ENCODE measurements at regions of chr12 and their contacts with region 1.

Region 1: DNA sequence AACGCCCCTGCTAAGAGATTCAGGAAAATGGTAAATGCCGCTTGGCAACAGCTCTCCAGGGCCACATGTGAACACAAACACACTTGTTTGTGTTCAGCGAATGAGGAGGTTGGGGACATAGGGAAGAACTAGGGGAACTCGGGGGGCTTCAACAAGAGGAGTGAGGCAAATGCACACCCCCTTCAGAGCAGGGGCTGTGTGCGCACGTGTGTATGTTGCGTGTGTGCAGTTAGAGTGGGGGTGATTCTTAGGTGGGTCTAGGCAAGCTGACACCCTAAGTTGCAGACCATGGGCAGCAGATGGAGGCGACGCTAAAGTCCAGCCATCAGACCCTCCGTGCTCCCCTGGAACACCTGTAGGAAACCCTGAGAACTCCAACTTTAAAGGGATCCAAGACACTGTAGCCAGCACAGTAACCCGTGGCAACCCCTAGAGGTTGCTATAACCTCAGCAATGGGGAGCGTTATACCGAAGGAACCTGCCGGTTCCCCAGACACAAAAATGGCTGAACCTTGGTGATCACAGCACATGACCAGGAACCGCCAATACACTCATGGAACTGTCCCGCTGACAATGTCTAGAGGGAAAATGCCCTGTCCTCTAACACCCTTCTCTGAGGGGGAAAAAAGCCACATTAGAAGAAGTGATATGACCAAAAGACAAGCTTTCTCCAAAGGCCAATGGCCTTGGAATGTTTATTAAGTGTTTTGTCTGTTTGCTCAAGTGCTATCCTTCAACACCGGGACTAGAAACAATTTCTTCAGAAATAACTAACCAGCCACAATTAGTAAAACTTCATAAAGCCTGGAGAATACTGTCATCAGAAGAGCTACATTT is 86.5 kb upstream of the CEP83 start:
- DNase-seq: peak in 3 of 4 donors; percentile 37 to 65 (median 44)
- ATAC-seq: peak; percentile 99
- H3K4me3 ChIP-seq: no peak overlapping the region
- H3K27ac ChIP-seq: no peak overlapping the region
- H3K4me1 ChIP-seq: no peaks in the 10 kb centered on the region
- H3K27me3 ChIP-seq: no peaks in the 10 kb centered on the region
- CTCF ChIP-seq: peak; percentile 68 to 74

Region 2: GRCh38 chr12:94762259-94762942 is 216.2 kb after region 1 on chr12:
- intact Hi-C with region 1: loop called in 1 of 2 experiments (anchors 10 kb)
- DNase-seq: no peak
- ATAC-seq: no peak
- H3K4me3 ChIP-seq: no peak overlapping the region
- H3K27ac ChIP-seq: peak overlapping the region in 1 of 2 donors; percentile 34
- H3K4me1 ChIP-seq: no peaks in the 10 kb centered on the region
- H3K27me3 ChIP-seq: no peaks in the 10 kb centered on the region
- CTCF ChIP-seq: no peak